Adrenal gland (tissue), 19 donors: ENCODE measurements at regions of chr6 and their contacts with region 1.

Region 1: DNA sequence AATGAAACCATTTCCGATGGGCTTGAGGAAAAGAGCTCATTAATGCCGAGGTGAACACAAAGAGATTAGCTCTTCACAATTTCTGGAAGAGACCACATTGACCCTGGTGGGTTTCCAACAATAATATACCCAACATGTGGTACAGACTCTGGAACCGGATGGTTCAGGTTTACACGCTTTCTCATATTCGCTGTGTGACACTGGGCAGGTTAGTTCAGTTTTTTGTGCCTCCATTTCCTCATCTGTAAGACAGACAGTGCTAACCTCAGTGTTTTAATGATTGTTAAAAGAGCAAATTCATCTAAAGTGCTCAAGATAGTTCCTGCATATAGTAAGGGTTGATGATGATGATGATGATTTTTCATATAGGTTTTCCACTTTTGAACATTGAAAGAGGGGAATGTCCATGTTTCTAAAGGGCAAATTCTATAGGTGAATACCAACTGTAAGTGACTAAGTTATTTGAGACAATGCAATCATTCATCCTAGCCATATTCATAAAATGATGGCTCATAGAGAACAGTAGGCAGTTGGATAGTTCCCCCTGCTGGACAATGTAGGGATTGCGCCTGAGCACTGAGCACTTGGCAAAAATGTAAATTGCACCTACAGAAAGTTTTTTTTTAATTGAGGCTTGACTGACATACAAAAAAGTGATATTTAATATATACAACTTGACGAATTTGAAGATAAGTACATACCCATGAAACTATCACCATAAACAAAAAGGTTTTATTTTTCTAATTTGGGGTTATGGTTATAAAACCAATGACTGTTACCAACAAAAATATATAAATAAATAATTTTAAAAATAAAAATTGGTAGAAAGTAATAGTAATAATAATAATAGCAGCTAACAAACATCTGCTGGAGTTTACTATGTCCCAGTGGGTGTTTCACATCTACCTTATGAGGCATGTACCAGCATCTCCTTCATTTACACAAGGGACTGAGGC is 2.1 kb upstream of the PERP start:
- DNase-seq: peak; percentile 49 to 91 (median 74)
- H3K4me3 ChIP-seq: no peak overlapping the region
- H3K27ac ChIP-seq: no peak overlapping the region
- H3K4me1 ChIP-seq: peaks cover 8 to 14% of the 10 kb centered on the region in 2 donors
- H3K27me3 ChIP-seq: no peaks in the 10 kb centered on the region
- CTCF ChIP-seq: peak; percentile 91 to 99 (median 93)
- POLR2A ChIP-seq: no peak

Region 2: DNA sequence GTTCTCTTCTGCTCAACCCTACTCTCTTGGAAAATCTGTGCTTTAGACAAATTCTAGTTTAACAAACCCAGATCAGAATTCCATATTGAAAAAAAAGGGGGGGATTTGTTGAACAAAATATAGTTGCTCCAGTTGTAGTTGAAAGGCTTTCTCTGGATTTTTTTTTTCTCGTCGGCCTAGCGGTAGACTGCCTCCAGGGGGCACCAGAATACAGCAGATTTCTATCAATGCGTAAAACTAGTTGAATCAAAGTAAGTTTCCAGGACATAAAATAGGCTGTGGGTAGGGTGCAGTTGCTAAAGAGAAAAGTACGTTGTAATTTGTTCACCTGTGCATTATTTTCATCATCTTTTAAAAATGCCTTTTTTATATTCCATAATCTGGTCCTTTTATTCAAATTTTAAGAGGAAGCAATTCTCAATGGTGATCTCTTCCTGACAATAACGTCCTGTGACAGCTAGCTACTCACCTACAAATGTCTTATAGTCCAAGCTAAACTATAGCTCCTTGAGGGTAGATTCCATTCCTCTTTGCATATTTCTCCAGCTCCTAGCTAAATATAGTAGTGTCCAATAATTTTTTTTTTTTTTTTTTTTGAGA is 107.5 kb before region 1 on chr6:
- intact Hi-C with region 1: loop called (anchors 1 to 5 kb)
- DNase-seq: peak; percentile 31 to 83 (median 56)
- H3K4me3 ChIP-seq: no peak overlapping the region
- H3K27ac ChIP-seq: no peak overlapping the region
- H3K4me1 ChIP-seq: no peaks in the 10 kb centered on the region
- H3K27me3 ChIP-seq: no peaks in the 10 kb centered on the region
- CTCF ChIP-seq: peak; percentile 64 to 85 (median 79)
- POLR2A ChIP-seq: no peak

Region 3: DNA sequence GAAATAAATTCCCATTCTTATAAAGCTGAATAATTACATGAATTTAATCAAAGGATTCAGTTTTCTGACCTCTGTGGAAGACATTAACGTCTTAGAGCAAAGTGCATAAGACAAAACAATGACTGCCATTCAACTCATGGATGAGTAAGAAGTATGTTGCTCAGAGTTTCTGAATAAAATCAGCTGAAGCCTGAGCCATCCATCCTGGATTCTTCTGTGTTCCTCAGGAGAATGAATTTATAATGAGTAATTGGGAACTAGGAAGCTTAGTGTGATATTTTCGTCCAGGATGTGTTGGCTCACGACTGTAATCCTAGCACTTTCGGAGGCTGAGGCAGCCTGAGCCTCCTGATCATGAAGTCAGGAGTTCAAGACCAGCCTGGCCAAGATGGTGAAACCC is 64.9 kb before region 1 on chr6:
- intact Hi-C with region 1: no loop called
- DNase-seq: no peak
- H3K4me3 ChIP-seq: no peak overlapping the region
- H3K27ac ChIP-seq: no peak overlapping the region
- H3K4me1 ChIP-seq: no peaks in the 10 kb centered on the region
- H3K27me3 ChIP-seq: no peaks in the 10 kb centered on the region
- CTCF ChIP-seq: no peak
- POLR2A ChIP-seq: no peak